ENCODE measurements at regions of chr4 and their contacts with region 1.

Region 1: DNA sequence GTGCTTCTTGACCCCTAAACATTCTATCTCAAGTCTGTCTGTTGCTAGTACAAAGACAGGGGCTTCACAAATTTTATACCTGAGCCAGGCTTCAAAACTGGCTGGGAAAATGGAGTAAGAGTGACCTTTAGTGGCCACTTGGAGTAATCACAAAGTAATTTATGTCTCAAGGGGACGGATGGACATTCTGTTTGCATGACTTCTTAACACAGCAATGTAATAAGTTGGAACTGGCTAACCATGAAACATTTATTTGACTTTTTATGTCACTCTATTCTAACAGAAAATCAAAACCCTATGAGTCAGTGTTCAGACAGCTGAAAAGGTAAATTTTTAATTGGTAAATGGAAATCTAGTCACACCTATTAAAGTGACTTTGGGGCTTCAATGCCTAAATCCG is 600.6 kb downstream of the ANKRD50 start:
- DNase-seq: peak; percentile 87
- ATAC-seq: peak; percentile 88
- H3K4me3 ChIP-seq: no peak overlapping the region
- H3K27ac ChIP-seq: no peak overlapping the region
- H3K4me1 ChIP-seq: no peaks in the 10 kb centered on the region; the same call in 1 of the 2 replicates
- H3K27me3 ChIP-seq: no peaks in the 10 kb centered on the region
- CTCF ChIP-seq: peak; percentile 82
- POLR2A ChIP-seq: no peak
- RAD21 ChIP-seq: peak; percentile 92

Region 2: GRCh38 chr4:122930862-122931261 is 1181.1 kb before region 1 on chr4:
- CTCF ChIA-PET with region 1: no interaction called
- POLR2A ChIA-PET with region 1: no interaction called
- dilution Hi-C with region 1: no loop called
- in situ Hi-C with region 1: no loop called
- intact Hi-C with region 1: loop called (anchors 10 kb)
- DNase-seq: peak; percentile 41
- ATAC-seq: no peak
- H3K4me3 ChIP-seq: no peak overlapping the region
- H3K27ac ChIP-seq: no peak overlapping the region
- H3K4me1 ChIP-seq: no peaks in the 10 kb centered on the region
- H3K27me3 ChIP-seq: no peaks in the 10 kb centered on the region
- CTCF ChIP-seq: peak; percentile 67
- POLR2A ChIP-seq: no peak
- RAD21 ChIP-seq: peak; percentile 60

Region 3: GRCh38 chr4:123127218-123127617 is 984.7 kb before region 1 on chr4:
- CTCF ChIA-PET with region 1: interaction called, 5 read pairs
- POLR2A ChIA-PET with region 1: no interaction called
- dilution Hi-C with region 1: no loop called
- in situ Hi-C with region 1: no loop called
- intact Hi-C with region 1: loop called (anchors 1 kb)
- DNase-seq: peak; percentile 42
- ATAC-seq: peak; percentile 83
- H3K4me3 ChIP-seq: no peak overlapping the region
- H3K27ac ChIP-seq: no peak overlapping the region
- H3K4me1 ChIP-seq: no peaks in the 10 kb centered on the region
- H3K27me3 ChIP-seq: no peaks in the 10 kb centered on the region
- CTCF ChIP-seq: peak; percentile 56
- POLR2A ChIP-seq: no peak
- RAD21 ChIP-seq: peak; percentile 61

Region 4: DNA sequence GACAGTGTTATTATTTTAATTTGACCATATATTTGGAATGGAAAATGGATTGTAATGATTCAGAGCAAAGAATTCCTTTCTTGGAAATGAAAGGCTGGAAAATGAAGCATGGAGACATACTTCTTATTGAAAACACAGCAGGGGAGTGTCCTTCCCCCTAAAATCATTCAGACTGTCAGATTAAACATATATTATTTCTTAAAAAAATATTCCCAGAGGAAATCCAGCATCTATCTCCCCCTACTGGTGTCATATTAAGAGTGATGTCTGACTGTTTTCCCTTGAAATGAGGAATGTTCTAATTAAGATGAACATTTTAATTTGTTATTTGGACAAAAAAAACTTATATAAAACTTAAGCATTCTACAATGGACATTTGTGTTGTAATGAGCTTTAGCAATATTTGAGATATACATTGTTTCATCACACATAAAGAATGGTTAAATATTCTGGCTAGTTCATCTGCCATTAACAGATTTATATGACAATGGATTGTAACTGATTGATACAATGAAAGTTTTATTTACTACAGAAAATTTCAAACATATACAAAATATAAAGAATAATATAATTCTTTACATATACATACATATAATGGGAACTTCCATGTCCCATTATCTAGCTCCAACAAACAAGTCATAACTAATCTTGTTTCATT is 450.7 kb before region 1 on chr4:
- CTCF ChIA-PET with region 1: no interaction called
- POLR2A ChIA-PET with region 1: no interaction called
- dilution Hi-C with region 1: no loop called
- in situ Hi-C with region 1: loop called (anchors 10 kb)
- intact Hi-C with region 1: loop called (anchors 2 kb)
- DNase-seq: peak; percentile 33
- ATAC-seq: peak; percentile 48; the same call in 1 of the 2 replicates
- H3K4me3 ChIP-seq: no peak overlapping the region
- H3K27ac ChIP-seq: no peak overlapping the region
- H3K4me1 ChIP-seq: no peaks in the 10 kb centered on the region
- H3K27me3 ChIP-seq: no peaks in the 10 kb centered on the region
- CTCF ChIP-seq: peak; percentile 64
- POLR2A ChIP-seq: no peak
- RAD21 ChIP-seq: peak; percentile 69

Region 5: DNA sequence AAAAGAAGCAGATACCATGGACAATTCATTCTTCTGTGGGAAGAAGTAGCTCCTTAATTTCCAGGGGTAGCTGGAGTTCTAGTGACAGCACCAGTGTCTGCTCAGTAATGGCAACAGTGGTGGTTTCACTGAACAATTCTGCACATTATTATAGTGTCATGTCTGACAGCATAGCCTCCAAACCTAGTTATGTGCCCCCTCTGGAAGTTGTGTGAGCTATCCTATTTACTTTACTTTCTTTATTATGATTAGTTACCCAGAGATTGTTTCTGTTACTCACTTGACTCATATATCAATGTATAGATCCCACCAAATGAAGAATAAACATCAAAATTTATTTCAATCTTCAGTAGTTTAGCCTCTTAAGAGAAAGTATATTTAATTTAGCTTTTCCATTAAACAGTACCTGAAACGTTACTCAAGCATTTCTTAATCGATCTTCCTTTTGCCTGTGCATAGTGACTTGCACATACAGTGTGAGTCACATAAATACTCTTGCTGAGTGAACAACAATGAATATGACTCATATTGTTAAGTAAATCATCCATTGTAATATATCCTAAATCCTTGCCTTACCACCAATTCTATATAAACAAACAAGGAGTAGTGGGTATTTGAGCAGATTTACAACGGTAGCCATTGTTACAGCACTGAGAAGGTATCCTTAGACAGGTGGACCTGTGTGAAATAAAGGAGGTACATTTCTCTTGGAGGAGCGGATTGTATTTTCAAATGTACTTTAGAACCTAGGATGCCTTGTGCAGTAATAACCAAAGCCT is 65.9 kb after region 1 on chr4:
- CTCF ChIA-PET with region 1: no interaction called
- POLR2A ChIA-PET with region 1: no interaction called
- dilution Hi-C with region 1: no loop called
- in situ Hi-C with region 1: no loop called
- intact Hi-C with region 1: no loop called
- DNase-seq: peak; percentile 91
- ATAC-seq: peak; percentile 71
- H3K4me3 ChIP-seq: no peak overlapping the region
- H3K27ac ChIP-seq: no peak overlapping the region
- H3K4me1 ChIP-seq: peaks cover 12% of the 10 kb centered on the region
- H3K27me3 ChIP-seq: no peaks in the 10 kb centered on the region
- CTCF ChIP-seq: no peak
- POLR2A ChIP-seq: no peak
- RAD21 ChIP-seq: no peak

Region 6: GRCh38 chr4:124262211-124263179 is 150.6 kb after region 1 on chr4:
- CTCF ChIA-PET with region 1: no interaction called
- POLR2A ChIA-PET with region 1: no interaction called
- dilution Hi-C with region 1: no loop called
- in situ Hi-C with region 1: no loop called
- intact Hi-C with region 1: loop called (anchors 2 kb)
- DNase-seq: peak; percentile 88
- ATAC-seq: peak; percentile 97
- H3K4me3 ChIP-seq: no peak overlapping the region
- H3K27ac ChIP-seq: no peak overlapping the region
- H3K4me1 ChIP-seq: no peaks in the 10 kb centered on the region
- H3K27me3 ChIP-seq: no peaks in the 10 kb centered on the region
- CTCF ChIP-seq: peak; percentile 91
- POLR2A ChIP-seq: no peak
- RAD21 ChIP-seq: peak; percentile 96

Region 7: GRCh38 chr4:124573076-124573475 is 461.2 kb after region 1 on chr4:
- CTCF ChIA-PET with region 1: interaction called, 17 read pairs
- POLR2A ChIA-PET with region 1: no interaction called
- dilution Hi-C with region 1: no loop called
- in situ Hi-C with region 1: no loop called
- intact Hi-C with region 1: no loop called
- DNase-seq: no peak
- ATAC-seq: no peak
- H3K4me3 ChIP-seq: no peak overlapping the region
- H3K27ac ChIP-seq: no peak overlapping the region
- H3K4me1 ChIP-seq: no peaks in the 10 kb centered on the region
- H3K27me3 ChIP-seq: no peaks in the 10 kb centered on the region
- CTCF ChIP-seq: no peak
- POLR2A ChIP-seq: no peak
- RAD21 ChIP-seq: no peak

Measured in IMR-90 (cell line).